Activated CD4-positive, alpha-beta T cell treated with anti-CD3 and anti-CD28 coated beads for 36 hours (primary cell): ENCODE measurements at regions of chr9 and their contacts with region 1.

Region 1: DNA sequence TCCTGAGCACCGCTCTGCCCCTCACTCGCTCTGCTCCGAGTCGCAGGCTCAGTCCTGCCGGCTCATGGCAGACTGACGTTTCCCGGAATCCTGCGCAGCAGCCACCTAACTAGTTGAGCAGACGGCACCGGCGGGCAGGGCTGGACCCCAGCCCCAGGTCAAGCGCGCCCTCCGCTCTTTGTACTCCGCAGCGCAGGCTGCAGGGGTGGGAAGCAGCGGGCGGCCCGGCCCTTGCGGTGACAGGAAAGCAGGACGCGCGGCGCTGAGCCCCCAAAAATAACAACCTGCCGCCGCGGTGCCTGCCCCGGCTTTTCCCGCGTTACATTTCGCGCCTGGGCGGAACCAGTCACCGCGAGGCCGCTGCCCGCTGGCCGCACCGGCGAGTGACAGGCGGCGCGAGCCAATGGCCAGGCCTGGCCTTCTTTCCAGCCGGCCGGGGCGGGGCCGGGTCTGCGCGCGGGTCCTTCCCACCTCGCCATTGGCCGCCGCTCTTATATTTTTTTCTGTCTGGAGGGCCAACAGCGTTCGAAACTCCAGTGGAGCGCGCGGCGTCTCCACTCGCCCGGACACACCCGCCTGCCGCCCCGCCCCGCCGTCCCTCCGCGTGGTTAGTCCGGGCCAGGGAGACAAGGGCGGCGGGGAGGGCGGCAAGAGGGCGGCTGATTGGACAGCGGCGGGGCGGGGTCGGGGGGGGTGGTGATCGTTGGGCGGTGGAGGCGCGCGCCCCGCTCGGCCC is at the start of gene ZNF367:
- DNase-seq: peak; percentile 97
- ATAC-seq: peak; percentile 81
- H3K4me3 Mint-ChIP-seq: peak within 1 kb of the TSS; percentile 93
- H3K27ac Mint-ChIP-seq: peak within 1 kb of the TSS; percentile 90
- H3K4me1 Mint-ChIP-seq: peaks cover 38% of the 10 kb centered on the region
- H3K27me3 Mint-ChIP-seq: no peaks in the 10 kb centered on the region
- total RNA-seq, gene ZNF367: 22.0 to 24.2 TPM

Region 2: DNA sequence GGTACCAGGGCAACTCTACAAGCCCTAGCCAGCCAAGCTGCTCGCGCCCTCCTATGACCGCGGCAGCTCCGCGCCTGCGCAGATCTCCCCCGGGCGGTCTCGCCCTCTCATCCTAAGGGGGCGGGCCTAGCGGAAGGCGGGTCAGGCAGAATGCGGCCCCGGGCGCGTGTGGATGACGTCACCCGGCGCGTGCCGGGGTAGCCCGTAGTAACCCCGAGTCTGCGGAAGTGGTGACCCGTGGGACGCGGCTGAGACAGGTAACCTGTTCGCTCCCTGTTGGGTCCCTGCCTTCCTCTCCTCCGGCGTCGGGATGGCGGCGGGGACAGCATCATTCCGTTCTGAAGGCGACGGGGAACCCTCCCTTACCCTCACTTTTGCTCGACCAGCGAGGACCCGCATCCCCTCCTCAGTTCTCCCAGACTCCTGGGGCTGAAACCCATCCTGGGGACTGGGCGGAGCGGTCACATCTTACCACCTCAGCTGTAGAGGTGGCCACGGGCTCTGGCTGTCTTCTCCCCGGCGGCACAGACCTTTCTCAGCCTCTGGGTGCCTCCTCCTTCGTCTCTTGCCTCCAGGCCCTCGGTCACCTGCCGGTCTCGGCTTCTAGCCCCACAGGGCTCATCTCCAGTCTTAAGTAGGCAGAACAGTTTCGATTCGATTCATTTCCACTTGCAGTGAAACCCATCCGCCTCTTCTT is 1691.6 kb before region 1 on chr9 and contains the start of gene AOPEP:
- CTCF ChIA-PET with region 1: no interaction called
- POLR2A ChIA-PET with region 1: no interaction called
- intact Hi-C with region 1: loop called in 1 of 2 experiments (anchors 1 kb)
- DNase-seq: peak; percentile 100
- ATAC-seq: peak; percentile 98
- H3K4me3 Mint-ChIP-seq: peak within 1 kb of the TSS; percentile 94
- H3K27ac Mint-ChIP-seq: peak within 1 kb of the TSS; percentile 97
- H3K4me1 Mint-ChIP-seq: peaks cover 8% of the 10 kb centered on the region
- H3K27me3 Mint-ChIP-seq: no peaks in the 10 kb centered on the region
- total RNA-seq, gene AOPEP: 8.9 to 9.5 TPM

Region 3: DNA sequence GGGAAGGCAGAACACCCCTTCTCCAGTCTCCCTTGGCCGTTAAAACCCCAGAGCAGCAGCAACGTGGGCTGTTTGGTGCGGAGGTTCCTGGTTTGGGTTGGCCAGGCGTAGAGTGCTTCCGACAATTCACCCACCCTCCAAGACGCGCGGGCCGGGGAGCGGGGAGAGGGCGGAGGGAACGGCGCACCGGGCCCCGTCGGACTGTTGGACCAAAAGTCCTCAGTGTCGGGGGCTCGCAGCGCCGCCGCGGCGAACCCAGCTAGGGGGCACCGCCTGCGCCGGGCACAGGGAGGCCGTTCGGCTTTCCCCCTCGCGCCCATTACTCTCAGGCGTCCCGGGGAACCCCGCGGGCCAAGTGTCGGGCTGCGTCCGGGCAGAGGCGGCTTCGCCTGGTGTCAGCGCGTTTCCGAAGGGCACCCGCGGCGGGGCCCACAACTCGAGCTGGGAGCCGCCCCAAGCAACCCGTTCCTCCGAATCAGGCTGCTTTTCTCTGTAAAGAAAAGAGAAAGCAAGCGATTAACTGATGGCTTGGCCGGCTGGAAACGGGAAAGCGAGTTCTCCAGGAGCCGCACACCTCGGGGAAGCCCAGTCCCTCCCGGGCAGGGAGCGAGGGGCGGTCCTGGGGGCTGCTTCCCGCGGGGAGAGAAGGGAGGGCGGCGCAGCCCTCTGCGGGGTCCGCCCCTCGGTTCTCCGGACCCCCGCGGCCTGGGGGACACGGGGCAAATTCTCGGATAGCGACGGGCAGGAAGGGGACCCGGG is 397.3 kb before region 1 on chr9:
- CTCF ChIA-PET with region 1: no interaction called
- POLR2A ChIA-PET with region 1: no interaction called
- intact Hi-C with region 1: loop called in 1 of 2 experiments (anchors 5 kb)
- DNase-seq: peak; percentile 71
- ATAC-seq: peak; percentile 38
- H3K4me3 Mint-ChIP-seq: peak overlapping the region; percentile 68
- H3K27ac Mint-ChIP-seq: peak overlapping the region; percentile 63
- H3K4me1 Mint-ChIP-seq: peaks cover 57% of the 10 kb centered on the region
- H3K27me3 Mint-ChIP-seq: peaks cover 43% of the 10 kb centered on the region

Region 4: DNA sequence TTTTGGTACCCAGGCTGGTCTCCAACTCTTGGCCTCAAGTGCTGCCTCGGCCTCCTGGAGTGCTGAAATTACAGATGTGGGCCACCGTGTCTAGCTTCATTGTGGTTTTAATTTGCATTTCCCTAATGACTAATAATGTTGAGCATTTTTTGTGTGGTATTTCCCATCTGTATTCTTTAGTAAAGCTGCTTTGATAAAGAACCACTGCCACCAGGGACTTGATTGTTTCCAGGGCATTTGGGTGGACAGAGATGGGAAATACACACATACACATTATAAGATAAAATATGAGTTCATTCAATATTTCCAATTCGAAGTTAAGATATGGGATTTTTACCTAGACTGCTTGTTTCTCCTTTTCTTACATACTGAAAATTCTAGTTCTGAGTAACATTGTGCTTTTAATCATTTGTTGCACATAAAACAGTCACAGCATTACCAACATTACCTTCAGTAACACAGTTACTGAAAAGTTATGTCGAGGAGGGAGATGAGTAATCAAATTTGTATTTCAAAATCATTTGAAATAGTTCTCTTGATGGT is 60.7 kb after region 1 on chr9:
- CTCF ChIA-PET with region 1: no interaction called
- POLR2A ChIA-PET with region 1: no interaction called
- intact Hi-C with region 1: loop called in 1 of 2 experiments (anchors 1 kb)
- DNase-seq: peak; percentile 59
- ATAC-seq: peak; percentile 83
- H3K4me3 Mint-ChIP-seq: no peak overlapping the region
- H3K27ac Mint-ChIP-seq: peak overlapping the region; percentile 72
- H3K4me1 Mint-ChIP-seq: peaks cover 28% of the 10 kb centered on the region
- H3K27me3 Mint-ChIP-seq: no peaks in the 10 kb centered on the region

Region 5: DNA sequence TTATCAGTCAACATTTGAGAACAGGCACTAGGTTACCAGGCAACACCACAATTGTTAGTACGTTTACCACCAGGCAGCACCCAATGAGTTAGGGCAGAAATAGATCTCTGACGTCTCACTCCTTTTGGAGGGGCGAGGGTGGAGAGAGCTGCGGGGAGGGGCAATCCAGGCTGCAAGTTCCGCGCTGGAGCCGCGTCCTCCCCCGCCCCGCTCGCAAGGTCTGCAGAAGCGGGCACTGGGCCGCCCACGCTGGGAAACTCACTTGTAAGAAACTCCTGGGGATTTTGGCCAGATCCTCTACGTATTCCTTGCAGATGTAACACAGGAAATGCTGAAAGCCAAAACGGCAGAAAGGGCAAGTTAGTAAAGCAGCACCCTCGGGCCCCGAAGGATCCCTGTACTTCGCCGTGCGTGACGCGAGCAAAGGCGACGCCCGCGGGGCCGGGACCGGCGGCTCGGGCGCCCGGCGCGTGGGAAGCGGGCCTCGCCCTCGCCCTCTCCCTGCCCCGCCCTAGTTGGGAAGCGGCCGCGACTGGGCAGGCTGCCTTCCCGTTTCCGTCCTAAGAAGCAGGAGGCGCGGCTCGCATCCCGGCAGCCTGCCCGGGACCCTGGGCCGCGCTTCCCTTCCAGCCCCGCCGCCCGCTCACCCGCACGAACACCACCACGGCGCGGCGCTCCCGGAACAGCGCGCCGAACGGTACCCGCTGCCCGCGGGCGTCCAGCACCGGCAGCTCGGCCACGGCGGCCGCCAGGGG is 236.4 kb after region 1 on chr9:
- CTCF ChIA-PET with region 1: no interaction called
- POLR2A ChIA-PET with region 1: no interaction called
- intact Hi-C with region 1: loop called (anchors 1 to 10 kb)
- DNase-seq: peak; percentile 78
- ATAC-seq: peak; percentile 69
- H3K4me3 Mint-ChIP-seq: peak overlapping the region; percentile 78
- H3K27ac Mint-ChIP-seq: peak overlapping the region; percentile 78
- H3K4me1 Mint-ChIP-seq: peaks cover 15% of the 10 kb centered on the region
- H3K27me3 Mint-ChIP-seq: no peaks in the 10 kb centered on the region